Activated T-helper 2 cell treated with anti-CD3 and anti-CD28 coated beads, Interferon-gamma antibody, Interleukin-2, Interleukin-4, amounts not matched to agents 10 μg/mL and 5 μg/mL and 100 μg/mL, durations not matched to agents 14 hours and 24 hours and 36 hours (primary cell): ENCODE measurements at regions of chr2 and their contacts with region 1.

Region 1: GRCh38 chr2:113848758-113849415 is 41.0 kb upstream of the ACTR3 start:
- DNase-seq: no peak
- H3K4me3 Mint-ChIP-seq: no peak overlapping the region
- H3K27ac Mint-ChIP-seq: peak overlapping the region; percentile 36
- H3K4me1 Mint-ChIP-seq: peaks cover 11% of the 10 kb centered on the region
- H3K27me3 Mint-ChIP-seq: no peaks in the 10 kb centered on the region

Region 2: GRCh38 chr2:113791697-113792590 is 56.9 kb before region 1 on chr2:
- intact Hi-C with region 1: loop called (anchors 2 kb)
- DNase-seq: no peak
- H3K4me3 Mint-ChIP-seq: peak overlapping the region; percentile 45
- H3K27ac Mint-ChIP-seq: peak overlapping the region; percentile 98
- H3K4me1 Mint-ChIP-seq: peaks cover 24% of the 10 kb centered on the region
- H3K27me3 Mint-ChIP-seq: no peaks in the 10 kb centered on the region

Region 3: DNA sequence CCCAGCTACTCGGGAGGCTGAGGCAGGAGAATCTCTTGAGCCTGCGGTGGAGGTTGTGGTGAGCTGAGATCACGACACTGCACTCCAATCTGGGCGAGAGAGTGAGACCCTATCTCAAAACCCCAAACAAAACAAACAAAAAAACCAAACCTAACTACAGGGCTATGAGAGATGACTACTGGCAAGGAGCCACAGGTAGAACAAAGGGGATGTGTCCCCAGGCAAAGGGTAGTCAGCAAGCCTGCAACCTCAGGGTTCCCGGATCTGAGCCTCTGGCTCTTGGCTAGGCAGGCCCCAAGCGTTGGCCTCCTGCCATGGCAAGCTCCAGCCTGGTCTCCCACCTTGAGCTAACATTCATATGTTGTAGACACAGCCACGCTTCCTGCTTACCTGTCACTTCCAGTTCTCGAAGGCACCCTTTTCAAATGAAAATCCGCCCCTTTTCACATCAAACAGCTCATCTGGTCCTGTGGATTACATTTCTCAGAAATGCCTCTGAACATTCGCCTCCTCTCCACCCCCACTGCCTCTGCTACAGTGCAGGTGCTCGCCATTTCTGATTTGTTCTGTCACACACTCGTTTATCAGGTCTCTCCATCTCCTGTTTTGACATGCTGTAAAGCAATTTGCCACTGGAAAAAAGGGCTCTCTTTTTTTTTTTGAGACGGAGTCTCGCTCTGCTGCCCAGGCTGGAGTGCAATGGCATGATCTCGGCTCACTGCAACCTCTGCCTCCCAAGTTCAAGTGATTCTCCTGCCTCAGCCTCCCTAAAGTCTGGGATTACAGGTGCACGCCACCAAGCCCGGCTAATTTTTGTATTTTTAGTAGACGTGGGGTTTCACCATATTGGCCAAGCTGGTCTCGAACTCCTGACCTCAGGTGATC is 27.9 kb after region 1 on chr2:
- intact Hi-C with region 1: loop called (anchors 2 kb)
- DNase-seq: peak; percentile 71
- H3K4me3 Mint-ChIP-seq: peak overlapping the region; percentile 30
- H3K27ac Mint-ChIP-seq: peak overlapping the region; percentile 85
- H3K4me1 Mint-ChIP-seq: peaks cover 42% of the 10 kb centered on the region
- H3K27me3 Mint-ChIP-seq: no peaks in the 10 kb centered on the region